GM12878 (cell line): ENCODE measurements at regions of chr12 and their contacts with region 1.

Region 1: GRCh38 chr12:92769124-92769901 is 66.5 kb downstream of the PLEKHG7 start:
- DNase-seq: no peak
- ATAC-seq: peak; percentile 86
- H3K4me3 ChIP-seq: no peak overlapping the region
- H3K27ac ChIP-seq: peak overlapping the region; percentile 45; the same call in 1 of the 2 replicates
- H3K4me1 ChIP-seq: peaks cover 17% of the 10 kb centered on the region
- H3K27me3 ChIP-seq: no peaks in the 10 kb centered on the region
- CTCF ChIP-seq: no peak
- EP300 ChIP-seq: peak in 1 of 2 experiments; percentile 64; a peak in 2 of 4 replicates
- POLR2A ChIP-seq: no peak
- RAD21 ChIP-seq: no peak

Region 2: GRCh38 chr12:92702754-92703679 is 66.3 kb before region 1 on chr12 and contains the start of gene PLEKHG7:
- CTCF ChIA-PET with region 1: no interaction called
- POLR2A ChIA-PET with region 1: interaction called, 5 read pairs
- RAD21 ChIA-PET with region 1: interaction called, 10 read pairs
- SMC1A ChIA-PET with region 1: interaction called, 19 read pairs
- in situ Hi-C with region 1: no loop called
- intact Hi-C with region 1: no loop called
- DNase-seq: peak; percentile 80
- ATAC-seq: peak; percentile 91
- H3K4me3 ChIP-seq: peak within 1 kb of the TSS; percentile 69
- H3K27ac ChIP-seq: peak within 1 kb of the TSS; percentile 81
- H3K4me1 ChIP-seq: peaks cover 25% of the 10 kb centered on the region
- H3K27me3 ChIP-seq: no peaks in the 10 kb centered on the region
- CTCF ChIP-seq: no peak
- EP300 ChIP-seq: peak in 1 of 2 experiments; percentile 28; a peak in 1 of 4 replicates
- POLR2A ChIP-seq: peak; percentile 63; the same call in 1 of the 2 replicates
- RAD21 ChIP-seq: 0 out of 2 replicates have a peak, but pooled peaks have one; percentile 1
- polyA plus RNA-seq, gene PLEKHG7: 0.16 to 0.34 TPM

Region 3: DNA sequence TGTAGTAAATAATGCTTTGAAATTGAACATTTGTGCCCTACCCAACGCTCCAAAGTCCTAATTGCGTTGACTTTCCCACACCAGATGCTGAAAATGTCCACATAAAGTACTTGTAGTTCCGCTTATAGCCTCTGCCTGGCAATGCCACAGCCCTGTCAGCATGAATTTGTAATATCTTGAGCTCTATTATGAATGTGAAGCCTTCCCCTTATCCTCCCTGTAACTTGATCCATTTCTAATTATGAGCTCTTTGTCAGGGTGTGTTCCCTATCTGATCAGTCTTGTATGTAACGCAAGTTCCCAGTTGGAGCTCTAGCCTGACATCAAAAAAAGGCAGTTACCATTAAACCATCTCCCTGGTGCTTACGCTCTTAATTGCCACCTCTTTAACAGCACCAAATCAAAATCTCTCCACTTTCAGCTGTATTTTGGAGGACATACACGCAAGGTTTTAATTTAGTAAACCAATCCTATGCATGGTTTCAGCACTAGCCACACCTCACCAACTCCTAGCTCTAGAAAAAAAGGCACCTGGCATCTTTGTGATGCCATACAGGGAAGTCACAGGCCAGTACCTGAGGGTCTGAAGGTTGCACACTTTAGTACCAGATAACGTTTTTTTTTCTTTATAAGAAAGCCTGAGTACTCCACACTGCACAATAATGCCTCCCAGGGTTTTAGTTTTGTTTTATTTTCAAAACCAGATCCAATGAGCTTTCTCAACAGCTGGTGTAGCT is 90.5 kb after region 1 on chr12:
- CTCF ChIA-PET with region 1: no interaction called
- POLR2A ChIA-PET with region 1: no interaction called
- RAD21 ChIA-PET with region 1: no interaction called
- SMC1A ChIA-PET with region 1: no interaction called
- in situ Hi-C with region 1: no loop called
- intact Hi-C with region 1: no loop called
- DNase-seq: no peak
- ATAC-seq: no peak
- H3K4me3 ChIP-seq: no peak overlapping the region
- H3K27ac ChIP-seq: no peak overlapping the region
- H3K4me1 ChIP-seq: no peaks in the 10 kb centered on the region
- H3K27me3 ChIP-seq: no peaks in the 10 kb centered on the region
- CTCF ChIP-seq: no peak
- EP300 ChIP-seq: no peak
- POLR2A ChIP-seq: no peak
- RAD21 ChIP-seq: no peak

Region 4: DNA sequence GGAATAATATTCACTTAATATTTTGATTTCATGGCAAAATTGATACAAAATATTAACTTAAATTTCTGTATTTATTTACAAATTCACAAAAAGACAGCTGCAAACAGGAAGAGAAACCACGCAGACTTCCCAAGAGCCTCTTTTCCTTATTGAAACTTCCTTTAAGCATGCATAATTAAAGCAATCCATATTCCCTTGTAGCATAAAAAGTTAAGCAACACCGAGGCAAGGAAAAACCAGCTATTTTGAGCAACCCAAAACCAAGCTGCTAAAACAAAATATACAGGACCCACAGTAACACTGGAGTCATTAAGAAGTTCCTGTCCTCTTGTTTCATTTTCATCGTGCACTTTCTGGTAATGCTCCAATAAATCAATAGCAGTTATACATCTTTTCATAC is 101.8 kb after region 1 on chr12:
- CTCF ChIA-PET with region 1: no interaction called
- POLR2A ChIA-PET with region 1: no interaction called
- RAD21 ChIA-PET with region 1: no interaction called
- SMC1A ChIA-PET with region 1: no interaction called
- in situ Hi-C with region 1: no loop called
- intact Hi-C with region 1: no loop called
- DNase-seq: no peak
- ATAC-seq: no peak
- H3K4me3 ChIP-seq: no peak overlapping the region
- H3K27ac ChIP-seq: no peak overlapping the region
- H3K4me1 ChIP-seq: peaks cover 5% of the 10 kb centered on the region
- H3K27me3 ChIP-seq: no peaks in the 10 kb centered on the region
- CTCF ChIP-seq: no peak
- EP300 ChIP-seq: no peak
- POLR2A ChIP-seq: no peak
- RAD21 ChIP-seq: no peak

Region 5: DNA sequence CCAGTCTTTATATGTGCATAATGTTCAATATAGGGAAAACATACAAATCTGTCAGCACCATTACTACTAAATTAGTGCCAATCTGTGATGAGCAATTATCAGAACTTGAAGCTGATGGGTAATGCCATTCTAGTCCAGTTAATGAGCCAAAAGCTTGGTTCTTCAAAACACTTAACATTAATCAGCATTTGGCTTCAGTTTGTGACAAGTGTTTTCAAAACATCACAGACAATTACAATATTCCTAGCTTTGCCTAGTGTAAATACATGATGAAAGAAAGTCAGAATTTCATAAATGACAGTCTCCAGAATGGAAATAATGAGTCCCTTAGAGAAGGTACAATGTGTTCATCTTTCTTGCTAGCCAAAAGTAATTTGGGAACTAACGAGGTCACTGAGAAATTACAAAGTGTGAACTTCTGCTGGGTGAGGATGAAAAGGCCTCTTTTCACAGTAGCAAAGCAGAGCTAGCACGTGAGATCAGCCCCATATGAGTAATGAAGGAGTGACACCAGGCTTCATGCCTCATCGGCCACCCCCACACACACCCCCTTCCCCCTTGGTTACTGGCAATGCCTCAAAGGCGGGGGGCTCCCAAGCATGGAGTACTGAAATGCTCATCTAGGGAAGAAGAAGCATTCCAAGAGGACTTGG is 340.4 kb after region 1 on chr12:
- CTCF ChIA-PET with region 1: no interaction called
- POLR2A ChIA-PET with region 1: no interaction called
- RAD21 ChIA-PET with region 1: no interaction called
- SMC1A ChIA-PET with region 1: no interaction called
- in situ Hi-C with region 1: no loop called
- intact Hi-C with region 1: no loop called
- DNase-seq: no peak
- ATAC-seq: peak; percentile 95
- H3K4me3 ChIP-seq: no peak overlapping the region
- H3K27ac ChIP-seq: no peak overlapping the region
- H3K4me1 ChIP-seq: peaks cover 14% of the 10 kb centered on the region
- H3K27me3 ChIP-seq: no peaks in the 10 kb centered on the region
- CTCF ChIP-seq: no peak
- EP300 ChIP-seq: peak; percentile 58 to 77
- POLR2A ChIP-seq: no peak
- RAD21 ChIP-seq: no peak; the same call in 1 of the 2 replicates